ENCODE measurements at regions of chr21 and their contacts with region 1.

Region 1: GRCh38 chr21:43866260-43866629 is 1.2 kb downstream of the AGPAT3 start:
- DNase-seq: no peak
- ATAC-seq: peak; percentile 14
- H3K4me3 ChIP-seq: peak overlapping the region; percentile 72 to 87 (median 79)
- H3K27ac ChIP-seq: peak overlapping the region; percentile 89
- H3K4me1 ChIP-seq: peaks cover 48% of the 10 kb centered on the region
- H3K27me3 ChIP-seq: peaks cover 3 to 9% of the 10 kb centered on the region in 2 experiments; a peak in 2 of 5 replicates
- CTCF ChIP-seq: no peak
- EP300 ChIP-seq: no peak
- POLR2A ChIP-seq: no peak
- RAD21 ChIP-seq: no peak

Region 2: GRCh38 chr21:43884012-43884860 is 18.0 kb after region 1 on chr21:
- CTCF ChIA-PET with region 1: no interaction called
- POLR2A ChIA-PET with region 1: interaction called, 11 read pairs
- in situ Hi-C with region 1: no loop called
- intact Hi-C with region 1: no loop called
- DNase-seq: peak; percentile 73
- ATAC-seq: peak; percentile 86
- H3K4me3 ChIP-seq: peak overlapping the region; percentile 24 to 66 (median 48); a peak in 4 of 6 replicates
- H3K27ac ChIP-seq: peak overlapping the region; percentile 76
- H3K4me1 ChIP-seq: peaks cover 37% of the 10 kb centered on the region
- H3K27me3 ChIP-seq: no peaks in the 10 kb centered on the region
- CTCF ChIP-seq: no peak
- EP300 ChIP-seq: peak in 1 of 2 experiments; percentile 17; a peak in 1 of 4 replicates
- POLR2A ChIP-seq: no peak; a peak in 2 of 4 replicates
- RAD21 ChIP-seq: no peak

Region 3: GRCh38 chr21:43911015-43911934 is 45.0 kb after region 1 on chr21:
- CTCF ChIA-PET with region 1: no interaction called
- POLR2A ChIA-PET with region 1: interaction called, 4 read pairs
- in situ Hi-C with region 1: no loop called
- intact Hi-C with region 1: loop called (anchors 1 kb)
- DNase-seq: peak; percentile 68
- ATAC-seq: peak; percentile 95
- H3K4me3 ChIP-seq: peak overlapping the region; percentile 20 to 63 (median 31); a peak in 5 of 6 replicates
- H3K27ac ChIP-seq: peak overlapping the region; percentile 72
- H3K4me1 ChIP-seq: peaks cover 53% of the 10 kb centered on the region
- H3K27me3 ChIP-seq: no peaks in the 10 kb centered on the region
- CTCF ChIP-seq: peak; percentile 87
- EP300 ChIP-seq: peak in 1 of 2 experiments; percentile 29; a peak in 1 of 4 replicates
- POLR2A ChIP-seq: no peak
- RAD21 ChIP-seq: peak; percentile 78

Measured in HepG2 (cell line).